ENCODE measurements at regions of chr15 and their contacts with region 1.

Region 1: GRCh38 chr15:92714477-92715401 is 59.2 kb upstream of the FAM174B start:
- DNase-seq: peak; percentile 63 to 73 (median 69)
- H3K4me3 ChIP-seq: peak overlapping the region in 1 of 2 donors; percentile 46
- H3K4me3 Mint-ChIP-seq: peak overlapping the region; percentile 71 to 90 (median 82)
- H3K27ac ChIP-seq: no peak overlapping the region
- H3K27ac Mint-ChIP-seq: no peak overlapping the region
- H3K4me1 ChIP-seq: peaks cover 12% of the 10 kb centered on the region
- H3K4me1 Mint-ChIP-seq: peaks cover 6 to 11% (median 9%) of the 10 kb centered on the region in 4 donors
- H3K27me3 ChIP-seq: peaks cover 3% of the 10 kb centered on the region
- H3K27me3 Mint-ChIP-seq: peaks cover 11 to 23% of the 10 kb centered on the region in 2 donors

Region 2: GRCh38 chr15:92097474-92098178 is 617.1 kb before region 1 on chr15:
- CTCF ChIA-PET with region 1: interaction called, 19 read pairs
- POLR2A ChIA-PET with region 1: interaction called, 3 read pairs
- intact Hi-C with region 1: no loop called
- DNase-seq: peak in 4 of 5 donors; percentile 42 to 48 (median 46)
- H3K4me3 ChIP-seq: no peak overlapping the region
- H3K4me3 Mint-ChIP-seq: peak overlapping the region in 6 of 8 donors; percentile 27 to 86 (median 54)
- H3K27ac ChIP-seq: no peak overlapping the region
- H3K27ac Mint-ChIP-seq: peak overlapping the region; percentile 5 to 93 (median 86)
- H3K4me1 ChIP-seq: peaks cover 50% of the 10 kb centered on the region
- H3K4me1 Mint-ChIP-seq: peaks cover 53 to 87% (median 60%) of the 10 kb centered on the region in 4 donors
- H3K27me3 ChIP-seq: no peaks in the 10 kb centered on the region
- H3K27me3 Mint-ChIP-seq: no peaks in the 10 kb centered on the region

Region 3: DNA sequence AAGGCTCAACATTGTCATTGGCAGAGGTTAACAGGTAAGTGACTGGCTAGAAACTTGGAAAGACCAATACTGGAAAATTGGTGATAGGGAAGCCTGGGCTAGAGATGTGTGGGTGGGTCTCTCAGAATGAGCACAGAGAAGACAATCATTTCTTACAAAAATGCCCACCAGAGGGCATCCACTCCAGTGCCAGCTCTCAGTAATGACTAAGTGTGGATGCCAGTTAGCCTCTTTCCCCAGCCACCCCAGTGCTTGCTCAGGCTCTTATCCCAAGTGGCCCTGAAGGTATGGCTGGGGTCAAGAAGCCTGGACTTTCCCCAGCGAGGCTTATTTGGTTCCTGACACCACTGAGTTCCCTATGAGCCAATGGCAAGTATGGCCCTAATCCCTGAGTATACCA is 437.0 kb before region 1 on chr15:
- CTCF ChIA-PET with region 1: no interaction called
- POLR2A ChIA-PET with region 1: no interaction called
- intact Hi-C with region 1: loop called (anchors 5 kb)
- DNase-seq: no peak
- H3K4me3 ChIP-seq: no peak overlapping the region
- H3K4me3 Mint-ChIP-seq: no peak overlapping the region
- H3K27ac ChIP-seq: no peak overlapping the region
- H3K27ac Mint-ChIP-seq: no peak overlapping the region
- H3K4me1 ChIP-seq: no peaks in the 10 kb centered on the region
- H3K4me1 Mint-ChIP-seq: no peaks in the 10 kb centered on the region
- H3K27me3 ChIP-seq: no peaks in the 10 kb centered on the region
- H3K27me3 Mint-ChIP-seq: peaks cover 11 to 14% of the 10 kb centered on the region in 2 donors

Region 4: GRCh38 chr15:92521624-92522008 is 193.1 kb before region 1 on chr15:
- CTCF ChIA-PET with region 1: interaction called, 20 read pairs
- POLR2A ChIA-PET with region 1: no interaction called
- intact Hi-C with region 1: no loop called
- DNase-seq: peak in 4 of 5 donors; percentile 7 to 18 (median 10)
- H3K4me3 ChIP-seq: no peak overlapping the region
- H3K4me3 Mint-ChIP-seq: no peak overlapping the region
- H3K27ac ChIP-seq: no peak overlapping the region
- H3K27ac Mint-ChIP-seq: no peak overlapping the region
- H3K4me1 ChIP-seq: no peaks in the 10 kb centered on the region
- H3K4me1 Mint-ChIP-seq: peaks cover 0 to 10% (median 3%) of the 10 kb centered on the region in 4 donors
- H3K27me3 ChIP-seq: no peaks in the 10 kb centered on the region
- H3K27me3 Mint-ChIP-seq: peaks cover 1 to 6% of the 10 kb centered on the region in 2 donors

Region 5: DNA sequence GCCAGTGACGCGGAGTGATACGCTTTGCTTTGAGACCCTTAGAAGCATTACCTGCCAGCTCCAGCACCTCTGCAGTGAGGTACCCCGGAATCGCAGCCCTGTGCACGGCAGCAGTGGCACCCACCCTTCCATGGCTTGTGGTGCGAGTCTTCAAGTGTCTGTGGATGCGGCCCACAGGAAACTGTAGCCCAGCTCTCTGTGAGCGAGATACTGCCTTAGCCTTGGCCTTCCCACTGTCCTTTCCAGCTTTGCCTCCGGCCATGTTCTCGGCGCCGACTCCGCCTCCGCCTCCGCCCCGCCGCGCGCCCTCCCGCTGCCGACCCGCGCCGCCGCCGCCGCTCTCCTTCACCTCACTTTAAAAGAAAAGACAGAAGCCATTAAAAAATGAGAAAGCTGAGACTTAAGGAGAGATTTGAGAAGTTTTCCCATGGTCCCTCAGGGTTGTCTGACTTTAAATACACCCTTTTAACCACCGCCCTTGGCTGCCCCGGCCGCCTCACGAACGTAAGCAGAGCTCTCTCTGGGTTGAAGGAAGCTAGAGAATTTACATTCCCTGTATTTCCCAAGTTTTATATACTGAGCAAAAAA is 19.3 kb after region 1 on chr15:
- CTCF ChIA-PET with region 1: interaction called, 10 read pairs
- POLR2A ChIA-PET with region 1: no interaction called
- intact Hi-C with region 1: no loop called
- DNase-seq: peak in 4 of 5 donors; percentile 4 to 11 (median 8)
- H3K4me3 ChIP-seq: peak overlapping the region in 1 of 2 donors; percentile 50
- H3K4me3 Mint-ChIP-seq: peak overlapping the region; percentile 73 to 91 (median 87)
- H3K27ac ChIP-seq: no peak overlapping the region
- H3K27ac Mint-ChIP-seq: peak overlapping the region in 6 of 7 donors; percentile 70 to 91 (median 84)
- H3K4me1 ChIP-seq: peaks cover 5% of the 10 kb centered on the region
- H3K4me1 Mint-ChIP-seq: peaks cover 0 to 19% (median 4%) of the 10 kb centered on the region in 4 donors
- H3K27me3 ChIP-seq: no peaks in the 10 kb centered on the region
- H3K27me3 Mint-ChIP-seq: peaks cover 5 to 16% of the 10 kb centered on the region in 2 donors

Measured in CD4-positive, alpha-beta memory T cell (primary cell).